Testis (tissue), 5 donors: ENCODE measurements at regions of chr3 and their contacts with region 1.

Region 1: GRCh38 chr3:126394575-126395228 is at the start of gene CFAP100:
- DNase-seq: peak; percentile 65
- H3K4me3 ChIP-seq: peak within 1 kb of the TSS; percentile 35 to 37
- H3K27ac ChIP-seq: no peak within 1 kb of the TSS
- H3K4me1 ChIP-seq: no peaks in the 10 kb centered on the region
- H3K27me3 ChIP-seq: no peaks in the 10 kb centered on the region
- CTCF ChIP-seq: no peak
- POLR2A ChIP-seq: no peak
- total RNA-seq, gene CFAP100: 21.4 to 56.2 TPM

Region 2: DNA sequence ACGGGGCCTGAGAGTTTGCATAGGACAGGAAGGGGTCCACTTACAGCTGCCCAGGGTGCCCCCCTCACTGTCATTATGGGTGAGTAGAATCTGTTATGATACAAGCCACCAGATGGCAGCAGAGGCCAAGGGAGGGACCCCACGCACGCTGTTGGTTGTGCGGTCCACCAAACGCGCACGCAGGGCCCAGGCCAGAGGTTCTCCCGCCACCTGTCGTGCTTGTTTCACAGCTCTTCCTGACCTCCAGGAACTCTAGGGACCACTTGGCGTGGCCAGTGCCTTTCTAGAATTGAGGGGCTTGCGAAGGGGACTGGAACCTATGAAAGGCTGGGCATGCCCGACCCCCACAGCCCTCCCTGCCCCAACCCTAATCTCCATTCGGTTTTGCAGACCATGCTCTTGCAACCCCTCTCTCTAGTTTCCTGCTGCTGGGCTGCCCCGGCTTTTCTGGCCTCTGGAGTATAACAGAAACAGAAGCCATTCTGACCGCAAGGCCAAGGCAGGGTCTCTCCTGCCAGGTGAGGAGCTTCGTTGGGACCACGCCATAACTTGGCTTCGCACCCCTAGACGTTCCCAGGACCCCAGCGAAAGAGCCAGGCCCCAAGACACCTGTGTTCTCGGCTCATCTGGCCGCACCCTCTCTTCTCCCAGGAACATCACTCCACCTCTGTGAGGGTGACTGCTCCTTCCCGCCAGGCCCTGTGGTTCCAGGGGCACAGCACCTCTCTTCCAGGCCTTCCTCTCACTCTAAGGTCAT is 260.3 kb before region 1 on chr3:
- intact Hi-C with region 1: loop called (anchors 10 kb)
- DNase-seq: peak; percentile 76
- H3K4me3 ChIP-seq: no peak overlapping the region
- H3K27ac ChIP-seq: no peak overlapping the region
- H3K4me1 ChIP-seq: no peaks in the 10 kb centered on the region
- H3K27me3 ChIP-seq: no peaks in the 10 kb centered on the region
- CTCF ChIP-seq: peak; percentile 75 to 86 (median 85)
- POLR2A ChIP-seq: no peak

Region 3: GRCh38 chr3:126267226-126267975 is 127.3 kb before region 1 on chr3:
- intact Hi-C with region 1: loop called (anchors 10 kb)
- DNase-seq: peak; percentile 91
- H3K4me3 ChIP-seq: peak overlapping the region; percentile 24 to 33
- H3K27ac ChIP-seq: peak overlapping the region; percentile 80 to 87
- H3K4me1 ChIP-seq: peaks cover 36% of the 10 kb centered on the region
- H3K27me3 ChIP-seq: no peaks in the 10 kb centered on the region
- CTCF ChIP-seq: no peak
- POLR2A ChIP-seq: no peak